ENCODE measurements at regions of chr17 and their contacts with region 1.

Region 1: GRCh38 chr17:10646392-10646990 is 10.6 kb downstream of the MYH3 start:
- DNase-seq: peak; percentile 63 to 74
- H3K4me3 ChIP-seq: no peak overlapping the region
- H3K27ac ChIP-seq: no peak overlapping the region
- H3K4me1 ChIP-seq: no peaks in the 10 kb centered on the region
- H3K27me3 ChIP-seq: no peaks in the 10 kb centered on the region
- CTCF ChIP-seq: peak; percentile 70 to 79 (median 74)
- POLR2A ChIP-seq: no peak

Region 2: DNA sequence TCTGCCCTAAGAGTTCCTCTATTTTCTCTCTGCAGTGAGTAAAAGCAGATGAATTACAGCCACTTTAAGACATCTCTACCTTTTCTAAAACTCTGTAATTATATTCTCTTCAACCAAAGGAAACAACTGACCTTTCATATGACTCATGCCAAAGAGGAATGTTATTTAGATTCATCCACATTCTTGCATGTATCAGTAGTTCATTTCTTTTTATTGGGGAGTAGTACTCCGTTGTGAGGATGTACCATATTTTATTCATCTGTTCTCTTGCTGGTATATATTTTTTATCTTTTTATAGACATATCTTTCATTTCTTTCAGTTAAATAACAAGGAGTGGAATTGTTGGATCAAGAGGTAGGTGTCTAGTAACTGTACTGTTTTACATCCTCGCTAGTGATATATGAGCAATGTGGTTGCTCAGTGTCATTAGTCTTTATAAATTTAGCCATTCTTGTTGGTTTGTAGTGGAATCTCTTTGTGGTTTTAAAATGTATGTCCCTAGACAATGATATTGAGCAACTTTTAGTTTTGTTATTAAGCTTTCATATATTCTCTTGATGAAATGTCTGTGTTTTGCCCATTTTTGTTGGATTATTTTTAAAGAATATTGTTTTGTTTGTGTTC is 217.0 kb before region 1 on chr17:
- intact Hi-C with region 1: no loop called
- DNase-seq: no peak
- H3K4me3 ChIP-seq: no peak overlapping the region
- H3K27ac ChIP-seq: no peak overlapping the region
- H3K4me1 ChIP-seq: no peaks in the 10 kb centered on the region
- H3K27me3 ChIP-seq: peaks cover 0 to 4% of the 10 kb centered on the region in 2 donors
- CTCF ChIP-seq: no peak
- POLR2A ChIP-seq: no peak

Region 3: DNA sequence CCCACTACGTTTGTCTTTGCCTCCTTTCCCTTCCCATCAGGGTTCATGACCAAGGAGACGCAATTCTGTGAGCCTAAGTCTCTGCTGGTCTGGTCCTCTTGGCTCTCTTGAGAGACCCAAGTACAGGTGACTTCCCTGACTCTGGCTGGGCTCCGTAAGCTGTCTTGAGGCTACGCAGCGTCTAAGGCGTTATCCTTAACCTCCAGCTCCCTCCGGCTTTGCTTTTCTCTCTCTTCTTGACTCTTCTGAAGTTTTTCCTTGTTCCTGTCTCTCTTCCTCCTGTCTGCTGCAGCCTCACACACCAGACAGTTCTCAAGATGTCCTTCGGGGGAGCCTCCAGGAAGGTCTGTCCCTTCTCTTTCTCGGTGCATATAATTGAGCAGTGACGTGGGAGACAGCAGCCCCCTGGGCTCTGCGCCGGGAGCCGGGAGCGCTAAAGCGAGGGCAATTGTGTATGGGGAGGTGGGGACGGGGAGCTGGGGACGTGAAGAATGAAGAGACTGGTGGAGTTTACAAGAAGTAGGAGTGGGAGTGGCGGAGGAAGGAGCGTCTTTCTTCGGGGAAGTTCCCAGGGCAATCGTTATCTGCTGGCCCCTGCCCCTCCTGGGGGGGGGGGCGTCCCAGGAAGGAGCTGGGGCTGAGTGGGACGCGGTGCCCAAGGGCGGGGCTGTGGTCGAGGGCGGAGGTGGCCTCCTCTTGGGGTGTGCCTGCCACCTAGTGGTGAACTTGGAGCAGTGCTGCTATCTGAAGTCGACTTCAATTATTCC is 198.3 kb after region 1 on chr17:
- intact Hi-C with region 1: loop called (anchors 5 kb)
- DNase-seq: peak; percentile 74 to 76
- H3K4me3 ChIP-seq: peak overlapping the region; percentile 38 to 44
- H3K27ac ChIP-seq: no peak overlapping the region
- H3K4me1 ChIP-seq: no peaks in the 10 kb centered on the region
- H3K27me3 ChIP-seq: no peaks in the 10 kb centered on the region
- CTCF ChIP-seq: peak; percentile 87 to 96 (median 95)
- POLR2A ChIP-seq: no peak